ENCODE measurements at regions of chr6 and their contacts with region 1.

Region 1: DNA sequence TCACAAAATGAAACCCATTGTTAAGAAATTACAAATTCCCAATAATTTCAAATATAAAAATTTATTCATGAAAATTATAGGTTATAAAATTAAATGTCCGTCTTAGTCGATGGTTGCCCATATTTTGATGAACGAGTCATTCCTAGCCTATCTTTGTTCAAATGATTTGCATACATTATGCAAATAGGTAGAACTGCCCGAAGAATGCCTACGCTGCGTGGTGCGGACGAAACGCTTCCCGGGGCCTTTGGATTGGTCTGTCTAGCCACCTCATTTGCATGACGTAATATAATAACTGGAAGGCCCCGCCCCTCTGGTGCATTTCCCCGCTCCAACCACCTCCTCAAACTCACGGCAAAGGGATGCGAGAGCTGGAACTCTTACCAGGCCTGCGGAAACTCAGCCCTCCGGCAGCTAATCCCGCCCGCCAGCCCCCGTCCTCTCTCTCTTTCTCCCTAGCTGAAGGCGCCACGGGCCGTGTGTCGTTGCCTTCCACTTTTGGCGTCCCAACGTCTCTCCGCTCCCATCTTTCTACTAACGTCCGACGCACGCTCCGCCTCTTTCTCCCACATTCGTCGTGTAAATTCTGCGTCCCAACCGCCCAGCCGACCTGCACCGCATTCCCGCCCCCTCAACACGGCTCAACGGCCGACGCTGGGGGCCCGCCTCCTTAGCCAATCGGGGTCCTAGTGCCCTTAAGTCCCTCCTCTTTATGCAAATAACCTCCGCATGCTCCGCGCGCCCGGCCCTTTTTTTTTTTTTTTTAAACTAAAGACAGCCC is 520 bp upstream of the PRRC2A start:
- DNase-seq: peak; percentile 99
- ATAC-seq: peak; percentile 84
- H3K4me3 ChIP-seq: peak overlapping the region; percentile 8 to 90 (median 84)
- H3K4me3 Mint-ChIP-seq: peak overlapping the region; percentile 86
- H3K27ac ChIP-seq: peak overlapping the region; percentile 97 to 99
- H3K27ac Mint-ChIP-seq: peak overlapping the region; percentile 95
- H3K4me1 ChIP-seq: peaks cover 26 to 35% of the 10 kb centered on the region in 2 donors
- H3K4me1 Mint-ChIP-seq: peaks cover 45% of the 10 kb centered on the region
- H3K27me3 ChIP-seq: no peaks in the 10 kb centered on the region
- H3K27me3 Mint-ChIP-seq: no peaks in the 10 kb centered on the region
- CTCF ChIP-seq: no peak

Region 2: DNA sequence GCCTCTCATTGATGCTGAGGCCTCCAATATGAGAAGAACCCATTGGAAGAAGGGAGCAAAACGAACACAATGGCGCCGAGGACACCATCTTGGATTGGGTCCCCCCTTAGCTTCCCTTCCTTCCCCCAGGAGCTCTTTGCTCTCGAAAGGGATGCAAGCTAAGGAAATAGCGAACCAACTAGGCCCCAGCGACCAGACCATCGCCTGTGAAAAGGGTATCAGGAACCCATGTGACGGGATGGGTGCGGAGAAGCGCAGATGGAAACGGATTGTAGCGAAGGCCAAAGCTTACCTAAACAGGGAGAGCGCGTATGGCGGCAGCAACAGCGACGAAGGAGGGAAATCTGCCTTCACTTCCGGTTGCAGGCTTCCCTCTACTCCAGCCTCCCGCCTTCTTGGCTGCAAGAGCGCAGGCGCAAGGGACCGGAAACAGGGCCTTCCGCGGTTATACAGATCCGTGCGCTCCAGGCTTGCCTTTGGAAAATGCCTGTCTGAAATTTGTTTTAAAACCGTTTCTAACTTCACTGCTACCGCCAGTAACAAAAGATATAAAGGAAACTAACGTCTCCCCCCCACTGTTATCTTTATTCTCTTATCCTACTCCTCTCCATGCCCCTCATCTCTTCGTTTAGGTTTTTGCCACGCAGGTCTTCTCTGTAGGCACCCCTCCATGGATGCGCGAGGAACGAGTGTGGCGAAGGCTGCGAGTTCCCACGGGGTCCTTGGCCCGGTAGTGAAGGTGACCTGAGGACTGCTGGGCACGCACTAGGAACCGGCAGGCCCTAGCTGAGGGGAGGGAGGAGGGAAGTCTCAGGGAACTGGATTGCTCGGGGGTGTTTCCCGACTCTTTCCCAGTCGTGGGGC is 78.1 kb before region 1 on chr6 and contains the start of gene DDX39B:
- CTCF ChIA-PET with region 1: interaction called, 4 read pairs
- POLR2A ChIA-PET with region 1: interaction called, 6 read pairs
- intact Hi-C with region 1: loop called (anchors 1 kb)
- DNase-seq: peak; percentile 97
- ATAC-seq: peak; percentile 72
- H3K4me3 ChIP-seq: peak within 1 kb of the TSS; percentile 79 to 100 (median 97)
- H3K4me3 Mint-ChIP-seq: peak within 1 kb of the TSS; percentile 99
- H3K27ac ChIP-seq: peak within 1 kb of the TSS; percentile 97 to 99
- H3K27ac Mint-ChIP-seq: peak within 1 kb of the TSS; percentile 93
- H3K4me1 ChIP-seq: peaks cover 37 to 43% of the 10 kb centered on the region in 2 donors
- H3K4me1 Mint-ChIP-seq: peaks cover 50% of the 10 kb centered on the region
- H3K27me3 ChIP-seq: no peaks in the 10 kb centered on the region
- H3K27me3 Mint-ChIP-seq: no peaks in the 10 kb centered on the region
- CTCF ChIP-seq: no peak
- total RNA-seq, gene DDX39B: 576 and 577 TPM in 2 replicates

Region 3: GRCh38 chr6:31580807-31581433 is 39.1 kb before region 1 on chr6:
- CTCF ChIA-PET with region 1: interaction called, 4 read pairs
- POLR2A ChIA-PET with region 1: interaction called, 12 read pairs
- intact Hi-C with region 1: no loop called
- DNase-seq: peak; percentile 89
- ATAC-seq: peak; percentile 62
- H3K4me3 ChIP-seq: peak overlapping the region; percentile 83 to 100 (median 96)
- H3K4me3 Mint-ChIP-seq: peak overlapping the region; percentile 98
- H3K27ac ChIP-seq: peak overlapping the region; percentile 95 to 97
- H3K27ac Mint-ChIP-seq: peak overlapping the region; percentile 99
- H3K4me1 ChIP-seq: peaks cover 71 to 83% of the 10 kb centered on the region in 2 donors
- H3K4me1 Mint-ChIP-seq: peaks cover 82% of the 10 kb centered on the region
- H3K27me3 ChIP-seq: no peaks in the 10 kb centered on the region
- H3K27me3 Mint-ChIP-seq: no peaks in the 10 kb centered on the region
- CTCF ChIP-seq: peak; percentile 99

Region 4: DNA sequence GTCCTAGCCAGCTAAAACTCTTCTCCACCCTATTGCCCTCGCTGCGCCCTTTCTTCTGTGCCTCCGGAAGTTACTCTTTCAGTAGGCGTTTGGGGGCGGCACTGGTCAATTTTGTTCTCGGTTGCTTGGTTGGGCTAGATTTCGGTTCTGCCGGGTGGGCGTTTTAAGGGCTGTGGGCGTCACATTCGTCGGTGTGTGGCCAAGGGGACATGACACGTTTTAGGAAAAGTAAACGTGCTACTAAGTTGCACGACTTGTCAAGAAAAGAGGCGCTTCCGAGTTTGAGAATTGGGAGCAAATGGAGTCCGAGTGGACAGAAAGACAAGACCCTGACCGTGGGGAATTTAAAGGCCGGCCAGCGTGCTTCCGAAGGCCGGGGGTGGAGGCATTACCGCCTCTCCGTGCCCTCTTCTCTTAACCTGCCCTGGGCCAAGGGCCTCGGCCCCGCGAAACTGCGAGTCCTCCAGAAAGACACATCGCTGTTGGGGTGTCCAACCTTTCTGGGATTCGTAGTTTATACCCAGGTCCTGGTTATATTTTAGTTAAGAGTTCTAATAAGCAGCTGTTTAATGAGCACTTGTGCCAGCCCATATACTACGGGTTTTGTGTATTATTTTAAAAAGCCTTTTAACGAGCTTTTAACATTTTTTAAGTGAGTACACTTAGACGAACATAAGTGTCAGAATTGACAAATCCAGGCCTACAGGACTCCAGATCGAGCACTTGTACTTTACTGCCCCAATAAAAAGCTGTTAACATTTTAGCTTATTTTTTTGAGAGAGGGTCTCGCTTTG is 33.1 kb after region 1 on chr6:
- CTCF ChIA-PET with region 1: interaction called, 5 read pairs
- POLR2A ChIA-PET with region 1: interaction called, 7 read pairs
- intact Hi-C with region 1: loop called (anchors 1 kb)
- DNase-seq: no peak
- ATAC-seq: peak; percentile 69
- H3K4me3 ChIP-seq: peak overlapping the region; percentile 66 to 96 (median 86)
- H3K4me3 Mint-ChIP-seq: peak overlapping the region; percentile 98
- H3K27ac ChIP-seq: peak overlapping the region; percentile 97 to 98
- H3K27ac Mint-ChIP-seq: peak overlapping the region; percentile 100
- H3K4me1 ChIP-seq: peaks cover 22 to 29% of the 10 kb centered on the region in 2 donors
- H3K4me1 Mint-ChIP-seq: peaks cover 48% of the 10 kb centered on the region
- H3K27me3 ChIP-seq: no peaks in the 10 kb centered on the region
- H3K27me3 Mint-ChIP-seq: no peaks in the 10 kb centered on the region
- CTCF ChIP-seq: no peak

Region 5: GRCh38 chr6:31901953-31902643 is 282.1 kb after region 1 on chr6 and contains the start of gene ZBTB12:
- CTCF ChIA-PET with region 1: no interaction called
- POLR2A ChIA-PET with region 1: no interaction called
- intact Hi-C with region 1: loop called (anchors 5 kb)
- DNase-seq: peak; percentile 93
- ATAC-seq: peak; percentile 64
- H3K4me3 ChIP-seq: peak within 1 kb of the TSS; percentile 27 to 82 (median 77)
- H3K4me3 Mint-ChIP-seq: peak within 1 kb of the TSS; percentile 94
- H3K27ac ChIP-seq: peak within 1 kb of the TSS; percentile 76 to 79
- H3K27ac Mint-ChIP-seq: peak within 1 kb of the TSS; percentile 93
- H3K4me1 ChIP-seq: peaks cover 13 to 23% of the 10 kb centered on the region in 2 donors
- H3K4me1 Mint-ChIP-seq: peaks cover 32% of the 10 kb centered on the region
- H3K27me3 ChIP-seq: no peaks in the 10 kb centered on the region
- H3K27me3 Mint-ChIP-seq: no peaks in the 10 kb centered on the region
- CTCF ChIP-seq: no peak
- total RNA-seq, gene ZBTB12: 8.1 and 8.9 TPM in 2 replicates

Measured in B cell (primary cell).